Posterior cingulate gyrus (tissue), 11 donors: ENCODE measurements at regions of chr19 and their contacts with region 1.

Region 1: DNA sequence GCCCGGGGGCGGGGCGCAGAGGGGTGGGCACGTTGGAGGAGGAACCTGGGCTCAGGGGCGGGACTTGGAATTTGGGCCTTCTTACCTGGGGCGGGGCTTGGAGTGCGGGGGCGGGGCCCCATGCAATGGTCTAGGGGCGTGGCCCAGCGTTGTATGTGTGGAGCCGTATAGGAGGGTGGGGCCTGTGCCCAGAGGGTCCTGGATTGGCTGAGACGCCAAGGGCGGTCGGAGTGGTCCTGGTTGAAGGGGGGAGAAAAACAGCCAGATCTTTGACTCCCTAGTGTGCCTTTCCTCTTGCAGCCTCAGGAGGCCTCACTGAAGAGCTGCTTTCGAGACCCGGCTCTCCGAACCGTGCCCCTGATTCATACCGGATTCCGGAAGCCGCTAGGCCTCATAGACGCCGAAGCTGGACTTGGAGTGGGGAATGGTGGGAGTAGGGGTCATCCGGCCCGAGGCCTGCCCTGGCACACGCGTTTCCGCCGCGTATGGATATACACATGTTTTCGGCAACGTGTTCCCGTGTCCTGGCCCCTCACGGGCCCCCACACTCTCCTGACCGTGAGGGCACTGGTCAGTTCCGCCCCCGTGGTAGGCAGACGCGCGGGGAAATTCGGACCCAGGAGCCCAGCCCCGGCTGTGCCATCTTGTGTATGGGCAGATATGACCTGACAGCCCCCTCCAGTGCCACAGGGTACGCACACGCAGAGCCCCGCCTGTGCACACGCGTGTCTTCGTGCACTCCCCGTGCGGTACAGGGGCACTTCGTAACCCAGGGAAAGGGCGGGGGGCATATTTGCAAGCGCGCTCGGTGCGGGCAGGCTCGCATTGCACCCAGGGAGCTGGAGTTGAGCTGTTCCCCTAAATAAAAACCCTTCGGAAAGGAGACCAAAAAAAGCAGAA is 661 bp upstream of the PRR12 start:
- DNase-seq: peak; percentile 63 to 99 (median 88)

Region 2: DNA sequence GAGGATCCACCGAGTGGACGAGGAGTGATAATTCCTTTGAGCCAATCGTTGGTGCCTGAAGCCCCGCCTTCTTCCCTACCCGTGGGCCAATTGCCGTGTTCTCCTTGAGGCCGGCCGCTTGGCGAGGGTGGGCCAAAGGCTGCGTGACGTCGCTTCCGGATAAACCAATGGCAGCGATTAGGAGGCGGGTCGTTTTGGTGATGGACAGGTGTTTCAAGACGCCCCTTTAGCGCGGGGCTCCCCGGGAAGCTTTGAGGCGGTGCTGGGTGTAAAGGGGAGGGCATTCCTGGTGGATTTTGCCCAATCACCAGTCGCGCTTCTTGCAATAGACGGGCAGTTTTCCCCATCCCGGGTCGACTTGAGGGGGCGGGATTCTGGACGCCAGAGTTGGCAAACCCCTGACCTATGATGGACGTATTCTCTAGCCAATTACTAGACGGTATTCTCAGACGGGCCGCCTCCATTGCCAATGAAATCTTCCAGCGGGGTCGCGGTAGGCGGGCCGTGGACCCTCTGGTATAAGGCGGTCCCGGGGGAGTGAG is 86.4 kb after region 1 on chr19:
- intact Hi-C with region 1: loop called (anchors 5 kb)
- DNase-seq: peak; percentile 99 to 100 (median 100)